ENCODE measurements at regions of chr11 and their contacts with region 1.

Region 1: GRCh38 chr11:128290106-128290840 is 297.1 kb downstream of the ETS1 start:
- DNase-seq: peak in 1 of 2 donors; percentile 76
- H3K4me3 ChIP-seq: peak overlapping the region in 1 of 2 donors; percentile 39
- H3K27ac ChIP-seq: peak overlapping the region in 1 of 2 donors; percentile 36
- H3K4me1 ChIP-seq: peaks cover 7 to 34% of the 10 kb centered on the region in 2 donors
- H3K27me3 ChIP-seq: no peaks in the 10 kb centered on the region
- CTCF ChIP-seq: peak; percentile 81 to 89 (median 87)

Region 2: DNA sequence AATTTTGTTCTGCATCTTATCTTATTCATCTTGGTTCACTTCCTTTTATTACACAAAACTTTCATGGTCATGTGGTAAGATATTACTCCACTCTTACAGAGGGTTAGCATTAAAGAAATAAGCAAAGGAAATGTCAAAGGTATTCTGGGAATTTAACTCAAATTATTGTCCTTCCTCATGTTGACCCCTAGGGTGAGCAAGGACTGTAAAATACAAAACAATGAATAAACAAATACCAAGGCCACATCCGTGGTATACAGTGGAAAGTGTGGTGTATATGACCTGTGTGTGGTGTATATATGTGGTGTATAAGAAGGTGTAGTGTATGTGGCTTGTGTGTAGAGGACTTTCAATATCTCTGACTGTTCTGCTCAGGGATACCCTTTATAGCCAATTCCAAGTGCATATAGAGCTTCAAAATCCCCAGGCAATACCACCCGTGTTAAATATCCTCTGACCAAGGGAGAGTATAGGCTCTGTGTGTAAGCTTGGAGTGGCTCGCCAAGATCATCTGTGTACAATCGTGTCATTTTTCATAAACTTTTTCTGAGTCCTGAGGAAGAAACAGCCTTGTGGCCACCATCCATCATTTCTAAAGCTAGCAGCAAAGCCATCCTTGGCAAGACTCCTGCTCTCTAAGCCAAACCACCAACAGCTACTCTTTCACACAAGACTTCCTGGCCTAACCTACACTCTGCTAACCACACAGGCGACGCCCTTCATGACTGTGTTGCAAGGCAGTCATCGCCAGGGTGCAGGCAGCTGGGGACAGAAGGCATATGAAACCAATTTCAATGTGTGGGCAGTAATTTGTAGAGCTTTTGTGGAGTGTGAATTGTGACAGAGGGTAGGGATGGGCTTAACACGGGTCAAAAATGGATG is 250.9 kb before region 1 on chr11:
- intact Hi-C with region 1: loop called (anchors 5 kb)
- DNase-seq: peak in 1 of 2 donors; percentile 25
- H3K4me3 ChIP-seq: no peak overlapping the region
- H3K27ac ChIP-seq: no peak overlapping the region
- H3K4me1 ChIP-seq: no peaks in the 10 kb centered on the region
- H3K27me3 ChIP-seq: no peaks in the 10 kb centered on the region
- CTCF ChIP-seq: no peak

Region 3: DNA sequence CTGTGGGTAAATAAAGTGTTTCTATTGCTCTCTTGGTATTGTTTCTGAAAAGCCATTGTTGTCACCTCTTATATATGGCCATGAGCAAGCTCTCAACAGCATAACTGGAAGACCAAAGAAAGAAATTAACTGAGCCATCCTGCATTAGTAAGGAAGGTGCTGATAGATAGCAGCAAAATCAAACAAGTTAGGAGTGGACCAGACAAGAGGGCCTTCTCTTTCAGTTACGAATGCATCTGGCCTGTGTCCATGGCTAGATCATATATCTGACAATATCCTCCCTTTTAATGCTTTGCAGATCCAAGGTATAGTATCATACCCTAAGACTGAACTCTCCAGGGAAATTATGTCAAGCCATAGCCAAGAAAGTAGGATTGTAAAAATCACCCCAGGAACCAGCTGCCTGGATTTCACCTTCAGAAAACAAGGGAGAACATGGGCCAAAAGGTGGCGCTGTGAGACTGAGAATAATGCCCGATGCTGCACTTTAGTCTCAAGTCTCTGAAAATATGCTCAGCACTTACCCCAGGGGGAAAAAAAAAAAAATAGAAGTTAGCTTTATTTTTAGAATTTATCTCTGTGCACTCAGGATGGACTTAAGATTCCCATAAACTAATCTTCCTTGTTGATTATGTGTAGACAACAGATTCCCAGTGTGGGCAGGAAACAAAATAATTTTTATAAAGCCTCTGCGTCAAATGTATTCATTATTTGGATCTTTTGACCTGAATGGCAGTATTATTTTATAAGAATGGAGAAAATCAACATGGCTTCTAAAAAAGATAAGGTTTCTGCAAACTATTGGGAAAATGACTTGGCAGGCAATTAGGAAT is 118.0 kb before region 1 on chr11:
- intact Hi-C with region 1: loop called (anchors 2 kb)
- DNase-seq: peak in 1 of 2 donors; percentile 91
- H3K4me3 ChIP-seq: no peak overlapping the region
- H3K27ac ChIP-seq: no peak overlapping the region
- H3K4me1 ChIP-seq: no peaks in the 10 kb centered on the region
- H3K27me3 ChIP-seq: no peaks in the 10 kb centered on the region
- CTCF ChIP-seq: peak; percentile 48 to 84 (median 74)

Region 4: GRCh38 chr11:128412847-128413791 is 122.8 kb after region 1 on chr11:
- intact Hi-C with region 1: no loop called
- DNase-seq: no peak
- H3K4me3 ChIP-seq: no peak overlapping the region
- H3K27ac ChIP-seq: no peak overlapping the region
- H3K4me1 ChIP-seq: no peaks in the 10 kb centered on the region
- H3K27me3 ChIP-seq: no peaks in the 10 kb centered on the region
- CTCF ChIP-seq: no peak

Region 5: DNA sequence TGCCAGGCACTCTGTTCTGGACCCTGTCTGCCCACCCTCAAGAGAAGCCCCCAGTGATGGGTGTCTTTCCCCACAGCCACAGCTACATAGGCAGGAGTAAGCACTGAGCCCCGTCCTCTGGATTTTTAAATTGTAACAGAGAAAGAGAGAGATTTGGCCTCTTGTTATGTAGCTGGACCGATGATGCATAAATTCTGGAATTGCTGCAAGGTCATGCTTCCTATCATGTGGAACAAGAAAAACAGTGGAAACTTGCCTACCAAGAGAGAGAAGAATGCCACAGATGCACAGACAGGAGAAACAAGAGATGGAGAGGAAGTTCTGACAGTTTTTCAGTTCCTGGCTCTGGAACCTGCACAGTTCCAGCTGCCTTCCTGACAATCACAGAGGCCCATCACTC is 146.9 kb after region 1 on chr11:
- intact Hi-C with region 1: loop called (anchors 5 kb)
- DNase-seq: peak in 1 of 2 donors; percentile 65
- H3K4me3 ChIP-seq: no peak overlapping the region
- H3K27ac ChIP-seq: peak overlapping the region; percentile 56 to 57
- H3K4me1 ChIP-seq: no peaks in the 10 kb centered on the region
- H3K27me3 ChIP-seq: no peaks in the 10 kb centered on the region
- CTCF ChIP-seq: no peak

Region 6: DNA sequence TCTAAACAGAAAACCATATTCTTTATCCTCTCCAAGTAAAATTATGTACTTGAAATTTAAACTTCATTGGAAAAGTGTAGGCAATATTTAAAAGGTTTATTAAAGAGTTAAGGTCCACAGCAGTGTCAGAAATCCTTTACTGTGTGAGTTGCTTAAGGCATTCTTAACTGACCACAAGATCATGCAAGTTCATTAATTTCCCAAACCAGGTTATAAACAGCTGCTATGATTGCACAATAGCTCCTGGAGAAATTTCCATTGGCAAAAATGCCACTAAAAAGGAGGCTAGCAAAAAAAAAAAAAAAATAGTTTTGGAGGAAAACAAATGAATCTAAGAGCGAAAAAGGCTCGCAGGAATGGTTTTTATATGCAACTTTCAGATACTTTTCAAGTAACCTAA is 190.9 kb after region 1 on chr11:
- intact Hi-C with region 1: loop called (anchors 2 kb)
- DNase-seq: no peak
- H3K4me3 ChIP-seq: no peak overlapping the region
- H3K27ac ChIP-seq: peak overlapping the region; percentile 51 to 54
- H3K4me1 ChIP-seq: peaks cover 0 to 19% of the 10 kb centered on the region in 2 donors
- H3K27me3 ChIP-seq: no peaks in the 10 kb centered on the region
- CTCF ChIP-seq: no peak

Region 7: DNA sequence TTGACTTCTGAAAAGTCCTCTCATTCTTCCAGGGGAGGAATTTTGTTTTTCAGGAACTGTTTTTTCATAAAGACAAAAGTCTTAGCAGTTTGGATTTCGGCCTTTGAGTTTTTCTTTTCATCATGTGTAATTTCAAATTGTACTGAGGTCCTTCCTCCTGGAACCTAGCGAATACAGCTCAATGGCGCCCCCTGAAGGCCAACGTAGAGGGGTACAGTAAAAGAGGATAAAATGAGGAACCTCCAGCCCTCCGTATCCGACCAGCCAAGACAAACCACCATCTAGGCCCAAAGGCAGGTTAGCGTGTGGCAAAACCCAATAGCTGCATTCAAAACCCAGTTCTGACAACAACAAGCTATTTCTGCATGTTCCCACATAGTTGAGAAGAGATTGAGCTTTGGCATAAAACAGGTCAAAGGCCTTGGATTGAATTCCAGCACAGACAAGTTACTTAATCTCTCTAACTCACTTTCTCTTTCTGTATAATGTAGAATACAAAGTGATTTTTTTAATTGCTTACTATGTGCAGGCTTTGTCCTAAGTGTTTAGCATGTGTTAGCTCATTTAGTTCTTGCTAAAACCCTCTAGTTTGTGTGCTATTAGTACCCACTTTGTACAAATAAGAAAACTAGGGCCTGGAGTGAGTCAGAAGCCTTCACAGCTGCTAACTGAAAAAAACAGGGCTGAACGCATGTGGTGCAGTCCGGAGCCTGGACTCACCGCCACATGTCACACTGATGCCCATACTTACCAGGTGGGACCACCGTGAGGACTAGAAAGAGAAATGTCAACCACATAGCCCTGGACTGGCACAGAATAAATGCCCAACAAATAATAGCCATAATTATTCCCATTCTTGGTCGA is 340.3 kb after region 1 on chr11:
- intact Hi-C with region 1: loop called (anchors 1 kb)
- DNase-seq: peak in 1 of 2 donors; percentile 92
- H3K4me3 ChIP-seq: no peak overlapping the region
- H3K27ac ChIP-seq: peak overlapping the region; percentile 45 to 49
- H3K4me1 ChIP-seq: no peaks in the 10 kb centered on the region
- H3K27me3 ChIP-seq: no peaks in the 10 kb centered on the region
- CTCF ChIP-seq: peak; percentile 86 to 91 (median 86)